Dendritic cell treated with granulocyte-macrophage colony-stimulating factor and Interleukin-4, amounts not matched to agents 40 ng/mL and 50 ng/mL, for 4 days (primary cell): ENCODE measurements at regions of chr4 and their contacts with region 1.

Region 1: GRCh38 chr4:145148980-145149379 is 31.4 kb downstream of the OTUD4 start:
- H3K4me3 Mint-ChIP-seq: no peak overlapping the region
- H3K27ac Mint-ChIP-seq: no peak overlapping the region
- H3K4me1 Mint-ChIP-seq: no peaks in the 10 kb centered on the region
- H3K27me3 Mint-ChIP-seq: no peaks in the 10 kb centered on the region

Region 2: GRCh38 chr4:143538979-143539669 is 1609.9 kb before region 1 on chr4:
- intact Hi-C with region 1: loop called (anchors 10 kb)
- H3K4me3 Mint-ChIP-seq: no peak overlapping the region
- H3K27ac Mint-ChIP-seq: no peak overlapping the region
- H3K4me1 Mint-ChIP-seq: no peaks in the 10 kb centered on the region
- H3K27me3 Mint-ChIP-seq: no peaks in the 10 kb centered on the region

Region 3: DNA sequence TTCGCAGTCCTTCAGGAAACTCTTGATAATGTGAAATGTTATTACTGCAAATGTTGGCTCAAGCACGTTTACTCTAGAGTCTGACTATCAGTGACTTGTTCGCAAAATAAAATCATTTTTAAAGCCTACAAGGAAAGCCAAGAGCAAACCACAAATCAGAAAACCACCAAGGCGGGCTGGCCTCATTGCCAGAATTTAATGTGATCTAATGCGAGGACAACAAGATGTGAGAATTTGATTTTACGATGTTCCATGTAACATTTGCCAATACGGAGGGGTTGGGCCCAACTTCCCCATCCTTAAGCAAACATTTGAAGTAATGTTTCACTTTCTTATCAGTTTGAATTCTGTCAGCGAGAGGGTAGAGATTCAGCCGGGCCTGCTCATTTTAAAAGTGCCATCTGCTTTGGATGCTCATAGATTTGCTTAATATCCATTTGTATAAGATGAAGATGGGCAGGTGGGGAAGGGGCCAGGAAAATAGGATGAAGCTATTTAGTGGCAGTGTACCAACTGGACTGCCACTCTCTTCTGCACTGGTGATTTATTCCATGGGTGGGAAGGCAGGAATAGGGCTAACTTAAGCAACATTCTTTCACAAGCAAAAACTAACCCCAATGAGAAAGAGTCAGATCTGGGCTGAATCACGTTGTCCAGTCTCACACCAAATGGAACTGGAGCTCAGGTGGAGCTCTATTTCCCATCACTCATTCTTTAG is 276.3 kb before region 1 on chr4:
- intact Hi-C with region 1: no loop called
- H3K4me3 Mint-ChIP-seq: no peak overlapping the region
- H3K27ac Mint-ChIP-seq: no peak overlapping the region
- H3K4me1 Mint-ChIP-seq: no peaks in the 10 kb centered on the region
- H3K27me3 Mint-ChIP-seq: no peaks in the 10 kb centered on the region

Region 4: DNA sequence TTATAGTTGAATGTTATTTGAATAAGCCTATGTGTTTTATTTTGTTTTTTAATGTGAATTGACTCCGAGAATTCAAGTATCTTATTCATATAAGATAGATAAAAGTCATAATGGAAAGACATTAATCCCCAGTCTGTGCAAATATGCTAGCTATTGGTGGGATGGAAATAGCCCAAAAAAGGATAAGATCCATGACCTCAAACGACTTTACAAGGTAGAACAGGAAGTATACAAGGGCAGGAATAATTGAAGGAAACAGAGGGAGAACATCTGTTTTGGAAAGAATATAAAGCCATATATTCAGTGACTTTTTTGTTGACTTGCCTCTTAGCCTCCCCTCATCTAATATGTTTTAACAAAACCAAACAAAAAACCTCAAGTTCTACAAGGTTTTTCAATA is 41.9 kb before region 1 on chr4:
- intact Hi-C with region 1: loop called (anchors 5 kb)
- H3K4me3 Mint-ChIP-seq: no peak overlapping the region
- H3K27ac Mint-ChIP-seq: no peak overlapping the region
- H3K4me1 Mint-ChIP-seq: peaks cover 6% of the 10 kb centered on the region
- H3K27me3 Mint-ChIP-seq: no peaks in the 10 kb centered on the region

Region 5: DNA sequence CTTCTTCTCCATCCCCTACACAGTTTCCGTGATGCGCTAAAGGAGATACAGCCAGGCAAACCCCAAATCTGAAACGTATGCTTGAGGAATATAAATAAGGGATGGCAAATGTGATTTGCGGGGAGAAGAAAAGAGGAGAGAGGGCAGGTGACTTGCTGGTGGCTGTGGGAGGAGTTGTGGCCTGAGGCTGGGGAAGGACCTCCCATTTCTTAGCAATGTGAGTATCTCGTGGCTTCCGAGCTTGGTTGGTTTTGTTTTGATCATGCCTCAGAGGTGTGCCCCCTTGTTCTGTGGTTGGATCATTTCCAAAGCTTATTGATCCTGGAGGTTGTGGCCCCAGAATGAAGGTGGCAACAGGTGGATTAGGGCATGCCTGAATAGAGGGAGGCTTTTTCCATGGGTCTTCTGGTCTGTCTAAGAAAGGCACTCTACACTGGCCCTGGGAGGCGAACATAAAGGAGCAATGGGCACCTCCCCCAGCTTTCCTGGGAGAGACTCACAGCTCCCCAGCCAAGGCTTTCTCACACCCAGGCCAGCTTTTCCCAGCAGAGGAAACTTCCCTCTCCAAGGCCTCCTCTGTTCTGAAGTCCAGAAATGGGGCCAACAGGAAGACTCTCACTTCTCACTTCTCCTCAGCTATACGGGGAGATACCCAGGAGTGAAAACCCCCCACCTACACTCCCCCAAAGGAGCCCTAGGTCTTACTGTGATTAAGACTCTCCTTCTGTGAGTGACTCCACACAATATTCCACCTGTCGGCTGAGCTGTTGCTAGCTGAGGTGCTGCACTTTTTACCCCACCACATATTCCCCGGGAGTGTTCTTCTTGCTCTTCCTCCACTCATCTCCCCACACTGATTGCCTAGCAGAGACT is 571.0 kb after region 1 on chr4:
- intact Hi-C with region 1: no loop called
- H3K4me3 Mint-ChIP-seq: no peak overlapping the region
- H3K27ac Mint-ChIP-seq: peak overlapping the region; percentile 48
- H3K4me1 Mint-ChIP-seq: peaks cover 15% of the 10 kb centered on the region
- H3K27me3 Mint-ChIP-seq: peaks cover 6% of the 10 kb centered on the region